ENCODE measurements at regions of chr3 and their contacts with region 1.

Region 1: GRCh38 chr3:50192689-50193141 is 1.3 kb downstream of the GNAT1 start:
- DNase-seq: peak; percentile 46
- H3K4me3 ChIP-seq: no peak overlapping the region
- H3K27ac ChIP-seq: no peak overlapping the region
- H3K4me1 ChIP-seq: peaks cover 7% of the 10 kb centered on the region
- H3K27me3 ChIP-seq: peaks cover 2% of the 10 kb centered on the region
- CTCF ChIP-seq: peak; percentile 90 to 91

Region 2: DNA sequence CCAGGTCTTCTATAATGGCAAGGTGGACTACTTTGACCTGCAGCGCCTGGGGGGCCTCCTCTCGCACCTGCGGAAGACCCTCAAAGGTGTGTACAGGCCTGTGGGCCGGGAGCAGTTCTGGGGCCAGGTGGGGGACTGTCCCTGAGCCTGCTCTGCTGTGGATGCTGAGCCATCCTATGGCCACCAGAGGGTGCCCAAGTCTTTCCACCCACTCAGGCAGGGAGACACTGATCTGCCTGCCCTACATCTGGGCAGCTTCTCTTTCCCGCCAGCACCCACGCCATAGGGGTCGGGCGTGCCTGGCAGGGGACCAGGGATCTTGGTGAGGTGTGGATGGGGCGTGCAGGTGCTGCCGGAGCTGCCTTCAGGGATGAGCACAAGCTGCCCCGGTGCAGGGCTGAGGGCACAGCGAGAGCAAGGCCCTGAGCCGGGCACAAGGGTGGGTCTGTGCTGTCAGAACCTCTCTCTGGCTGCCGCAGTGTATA is 489.2 kb before region 1 on chr3:
- CTCF ChIA-PET with region 1: no interaction called
- dilution Hi-C with region 1: no loop called
- in situ Hi-C with region 1: no loop called
- intact Hi-C with region 1: loop called (anchors 10 kb)
- DNase-seq: peak; percentile 49
- H3K4me3 ChIP-seq: no peak overlapping the region
- H3K27ac ChIP-seq: no peak overlapping the region
- H3K4me1 ChIP-seq: peaks cover 3% of the 10 kb centered on the region
- H3K27me3 ChIP-seq: no peaks in the 10 kb centered on the region
- CTCF ChIP-seq: peak; percentile 93 to 94

Region 3: GRCh38 chr3:50154840-50155474 is 37.8 kb before region 1 on chr3 and contains the start of gene SEMA3F:
- CTCF ChIA-PET with region 1: no interaction called
- dilution Hi-C with region 1: loop called (anchors 5 kb)
- in situ Hi-C with region 1: no loop called
- intact Hi-C with region 1: loop called (anchors 1 kb)
- DNase-seq: peak; percentile 81
- H3K4me3 ChIP-seq: peak within 1 kb of the TSS; percentile 69 to 84 (median 71)
- H3K27ac ChIP-seq: peak within 1 kb of the TSS; percentile 67
- H3K4me1 ChIP-seq: peaks cover 70% of the 10 kb centered on the region
- H3K27me3 ChIP-seq: no peaks in the 10 kb centered on the region
- CTCF ChIP-seq: no peak
- total RNA-seq, gene SEMA3F: 102 to 129 TPM

Region 4: DNA sequence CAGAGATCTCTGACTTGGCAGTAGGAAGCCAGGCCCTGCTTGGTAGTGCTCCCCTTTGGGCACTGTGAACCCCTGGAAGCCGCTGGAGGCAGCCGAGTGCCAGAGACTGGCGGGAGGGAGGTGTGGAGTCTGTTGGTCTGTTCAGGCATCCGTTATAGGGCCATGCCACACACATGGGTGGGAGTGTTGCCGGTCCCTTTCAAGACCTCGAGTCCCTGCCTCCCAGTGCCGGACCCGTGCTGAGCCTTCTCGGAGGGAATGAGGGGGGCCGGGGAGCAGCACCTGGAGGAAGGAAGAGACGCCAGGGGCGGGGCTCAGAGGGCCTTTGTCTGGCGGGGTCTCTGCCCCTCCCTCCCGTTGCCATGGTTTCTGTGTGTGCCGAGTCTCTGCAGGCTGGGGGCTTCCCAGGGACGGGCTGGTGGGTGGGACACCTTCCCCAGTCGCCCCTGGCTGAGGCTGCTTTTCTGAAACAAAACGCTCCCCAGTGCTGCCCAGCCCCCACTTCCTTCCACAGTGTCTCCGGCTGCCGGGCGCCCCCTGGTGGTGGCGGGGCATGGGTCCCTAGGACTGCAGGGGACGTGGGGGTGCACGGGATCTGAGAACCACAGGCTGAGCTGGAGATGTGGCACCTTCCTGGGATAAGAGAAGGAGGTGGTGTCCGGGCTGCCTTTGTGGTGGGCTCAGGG is 53.3 kb after region 1 on chr3:
- CTCF ChIA-PET with region 1: no interaction called
- dilution Hi-C with region 1: loop called (anchors 5 kb)
- in situ Hi-C with region 1: no loop called
- intact Hi-C with region 1: loop called (anchors 1 kb)
- DNase-seq: no peak
- H3K4me3 ChIP-seq: peak overlapping the region in 2 of 3 experiments; percentile 19 to 41
- H3K27ac ChIP-seq: peak overlapping the region; percentile 75
- H3K4me1 ChIP-seq: peaks cover 78% of the 10 kb centered on the region
- H3K27me3 ChIP-seq: no peaks in the 10 kb centered on the region
- CTCF ChIP-seq: peak; percentile 93 to 99

Region 5: DNA sequence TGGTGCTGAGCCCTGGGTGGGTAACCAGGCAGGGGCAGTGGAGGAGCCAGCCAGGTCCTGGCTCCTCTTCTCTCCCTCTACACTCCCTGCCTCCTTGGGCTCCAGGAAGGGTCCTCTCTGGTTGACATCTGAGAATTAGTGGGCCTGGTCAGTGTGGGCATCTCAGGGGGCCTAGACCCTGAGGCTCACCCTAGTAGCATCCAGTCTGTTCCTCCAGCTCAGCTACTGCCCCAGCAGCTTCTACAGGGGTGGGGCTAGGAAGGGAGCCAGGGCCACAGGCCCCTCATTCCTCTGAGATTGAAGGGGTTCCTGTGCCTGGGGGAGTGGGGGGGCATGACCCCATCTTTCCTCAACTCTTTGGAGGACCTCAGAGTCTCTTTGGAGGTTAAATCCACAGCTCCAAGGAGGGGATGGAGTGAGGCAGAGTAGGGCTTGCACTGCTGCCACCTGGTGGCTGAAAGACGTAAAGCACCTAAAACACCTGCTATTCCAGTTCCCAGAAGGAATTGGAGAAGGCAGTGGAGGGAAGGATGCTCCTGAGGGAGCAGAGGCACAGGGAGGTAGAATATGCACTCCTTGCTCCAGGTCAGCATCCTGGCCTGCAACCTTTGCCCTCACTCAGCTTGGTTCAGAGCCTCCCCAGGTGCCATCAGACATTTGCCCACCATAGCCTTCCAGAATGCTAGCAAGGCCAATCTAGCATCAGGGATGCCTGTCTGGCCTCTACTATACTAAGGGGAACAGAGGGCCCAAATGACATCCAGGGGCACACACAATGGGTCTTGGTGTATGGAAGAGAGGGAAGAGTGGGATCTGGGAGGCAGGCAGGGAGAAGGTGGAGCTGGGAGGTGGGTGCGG is 349.7 kb after region 1 on chr3:
- CTCF ChIA-PET with region 1: no interaction called
- dilution Hi-C with region 1: no loop called
- in situ Hi-C with region 1: no loop called
- intact Hi-C with region 1: loop called (anchors 5 kb)
- DNase-seq: peak; percentile 44
- H3K4me3 ChIP-seq: no peak overlapping the region
- H3K27ac ChIP-seq: no peak overlapping the region
- H3K4me1 ChIP-seq: peaks cover 9% of the 10 kb centered on the region
- H3K27me3 ChIP-seq: no peaks in the 10 kb centered on the region
- CTCF ChIP-seq: peak; percentile 93